Prostate gland (tissue), 2 donors: ENCODE measurements at regions of chr22 and their contacts with region 1.

Region 1: GRCh38 chr22:38201710-38202436 is at the start of gene MAFF:
- DNase-seq: peak; percentile 98
- H3K4me3 ChIP-seq: peak within 1 kb of the TSS; percentile 53 to 84
- H3K27ac ChIP-seq: peak within 1 kb of the TSS; percentile 96 to 100
- H3K4me1 ChIP-seq: no peaks in the 10 kb centered on the region
- H3K27me3 ChIP-seq: no peaks in the 10 kb centered on the region
- CTCF ChIP-seq: peak in 1 of 4 experiments; percentile 3
- POLR2A ChIP-seq: peak; percentile 98
- total RNA-seq, gene MAFF: 23.6 to 26.0 TPM

Region 2: DNA sequence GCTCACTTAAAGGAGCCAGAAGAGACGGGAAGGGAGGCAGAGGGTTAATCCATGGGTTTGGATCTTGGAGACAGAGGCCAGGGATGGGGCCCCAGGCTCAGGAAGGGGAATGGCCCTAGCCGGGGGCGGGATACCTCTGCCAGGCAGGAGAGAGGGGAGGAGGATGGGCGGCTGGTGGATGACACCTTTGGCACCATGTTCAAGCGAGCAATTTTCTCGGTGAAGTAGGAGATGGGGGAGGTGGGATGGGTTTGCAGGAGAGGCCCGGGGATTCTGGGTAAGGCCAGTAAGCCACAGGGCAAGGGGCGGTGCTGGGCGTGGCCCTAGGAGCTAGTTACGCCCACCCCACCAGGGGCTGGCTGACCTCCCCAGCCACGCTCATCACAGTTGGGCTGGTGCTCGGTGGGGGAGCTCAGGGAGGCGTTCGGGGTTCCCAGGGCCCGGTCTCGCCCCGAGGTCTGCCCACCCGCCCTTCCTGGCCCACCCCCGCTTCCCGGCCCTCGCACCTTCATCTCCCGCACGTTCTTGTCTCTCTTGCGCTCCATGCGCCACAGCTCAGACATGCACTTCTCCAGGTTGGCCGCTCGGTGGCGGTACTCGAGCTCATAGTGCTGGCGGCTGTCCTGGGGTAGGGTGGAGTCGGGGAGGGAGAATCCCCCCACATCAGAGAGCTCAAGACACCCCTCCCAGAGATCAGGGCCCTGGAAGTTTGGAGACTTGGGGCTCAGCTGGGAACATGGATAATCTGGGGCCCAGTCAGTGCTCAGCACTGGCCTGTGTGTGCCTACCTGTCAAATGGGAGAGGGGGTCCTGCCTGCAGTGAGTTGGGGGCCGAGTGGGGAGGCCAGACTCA is 104.1 kb before region 1 on chr22:
- intact Hi-C with region 1: no loop called
- DNase-seq: no peak
- H3K4me3 ChIP-seq: no peak overlapping the region
- H3K27ac ChIP-seq: no peak overlapping the region
- H3K4me1 ChIP-seq: no peaks in the 10 kb centered on the region
- H3K27me3 ChIP-seq: no peaks in the 10 kb centered on the region
- CTCF ChIP-seq: peak in 1 of 4 experiments; percentile 12
- POLR2A ChIP-seq: no peak

Region 3: DNA sequence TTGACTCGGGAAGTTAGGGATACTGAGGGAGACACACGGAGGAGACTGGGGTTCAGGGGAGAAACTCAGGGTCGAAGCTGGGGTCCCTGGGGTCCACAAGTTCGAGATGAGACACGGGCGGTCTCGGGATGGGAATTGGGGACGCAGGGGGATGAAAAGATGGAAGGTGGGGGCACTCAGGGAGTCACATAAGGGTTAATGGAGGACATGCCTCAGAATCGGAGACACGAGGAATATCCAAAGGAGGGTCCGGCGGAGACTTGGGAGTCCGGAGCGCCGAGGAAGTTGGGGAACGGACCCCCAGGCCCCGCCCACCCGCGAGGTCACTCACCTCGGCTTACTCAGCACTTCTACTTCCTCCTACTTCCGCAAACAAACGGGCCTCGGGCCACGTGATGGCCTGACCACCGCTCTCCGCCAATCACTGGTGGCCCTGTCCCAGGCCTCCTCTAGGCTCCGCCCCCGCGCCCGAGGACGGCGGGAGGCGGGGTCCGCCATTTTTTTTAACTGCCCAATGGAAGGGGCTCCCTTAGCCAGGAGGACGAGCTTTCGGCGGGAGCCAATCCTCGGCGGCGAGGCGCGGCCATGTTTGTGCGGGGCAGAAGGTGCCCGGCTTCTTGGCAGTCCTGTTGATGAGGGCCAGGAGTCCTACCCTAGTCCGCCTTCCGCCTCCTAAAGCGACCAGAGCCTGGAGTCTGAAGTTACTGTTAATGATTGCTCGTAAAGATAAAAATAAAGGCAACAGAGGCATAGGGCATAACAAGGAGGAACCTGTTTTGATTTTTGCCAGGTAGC is 20.2 kb before region 1 on chr22 and contains the start of gene PLA2G6:
- intact Hi-C with region 1: loop called (anchors 1 kb)
- DNase-seq: peak; percentile 98
- H3K4me3 ChIP-seq: peak within 1 kb of the TSS; percentile 36 to 53
- H3K27ac ChIP-seq: peak within 1 kb of the TSS; percentile 95 to 99
- H3K4me1 ChIP-seq: peaks cover 22% of the 10 kb centered on the region
- H3K27me3 ChIP-seq: no peaks in the 10 kb centered on the region
- CTCF ChIP-seq: peak in 1 of 4 experiments; percentile 4
- POLR2A ChIP-seq: peak; percentile 71
- total RNA-seq, gene PLA2G6: 61.5 to 138 TPM

Region 4: GRCh38 chr22:38272373-38273134 is 70.7 kb after region 1 on chr22 and contains the start of gene TMEM184B:
- intact Hi-C with region 1: loop called (anchors 5 kb)
- DNase-seq: peak; percentile 66
- H3K4me3 ChIP-seq: peak within 1 kb of the TSS; percentile 94 to 98
- H3K27ac ChIP-seq: peak within 1 kb of the TSS; percentile 86 to 91
- H3K4me1 ChIP-seq: peaks cover 6% of the 10 kb centered on the region
- H3K27me3 ChIP-seq: no peaks in the 10 kb centered on the region
- CTCF ChIP-seq: no peak
- POLR2A ChIP-seq: peak; percentile 79
- total RNA-seq, gene TMEM184B: 76.0 to 137 TPM

Region 5: GRCh38 chr22:38317122-38317994 is 115.5 kb after region 1 on chr22 and contains the start of gene CSNK1E:
- intact Hi-C with region 1: loop called (anchors 5 kb)
- DNase-seq: peak; percentile 76
- H3K4me3 ChIP-seq: peak within 1 kb of the TSS; percentile 79 to 80
- H3K27ac ChIP-seq: peak within 1 kb of the TSS; percentile 99
- H3K4me1 ChIP-seq: peaks cover 27% of the 10 kb centered on the region
- H3K27me3 ChIP-seq: no peaks in the 10 kb centered on the region
- CTCF ChIP-seq: peak in 1 of 4 experiments; percentile 3
- POLR2A ChIP-seq: peak; percentile 67
- total RNA-seq, gene CSNK1E: 82.8 to 190 TPM

Region 6: DNA sequence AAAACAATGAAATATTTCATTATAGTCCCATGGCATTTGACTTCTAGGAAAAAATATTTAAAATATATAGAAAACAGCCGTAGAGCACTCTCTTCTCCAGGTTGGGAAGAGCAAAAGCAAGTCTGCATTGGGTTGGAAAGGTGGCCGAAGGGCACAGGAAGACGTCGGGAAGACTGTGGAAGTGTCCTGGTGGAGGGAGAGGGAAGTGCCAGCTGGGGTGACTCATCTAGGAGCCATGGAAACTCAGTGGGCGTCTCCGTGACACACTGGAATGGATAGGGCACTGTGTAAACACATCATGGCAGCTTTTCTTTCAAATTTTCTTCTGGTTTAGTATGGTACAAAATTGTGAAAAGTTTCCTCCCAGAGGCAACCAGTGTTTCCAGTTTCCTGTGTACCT is 516.5 kb after region 1 on chr22:
- intact Hi-C with region 1: no loop called
- DNase-seq: peak; percentile 59
- H3K4me3 ChIP-seq: no peak overlapping the region
- H3K27ac ChIP-seq: peak overlapping the region in 1 of 2 donors; percentile 4
- H3K4me1 ChIP-seq: no peaks in the 10 kb centered on the region
- H3K27me3 ChIP-seq: no peaks in the 10 kb centered on the region
- CTCF ChIP-seq: peak in 2 of 4 experiments; percentile 59 to 71
- POLR2A ChIP-seq: no peak